Activated T-helper 2 cell treated with anti-CD3 and anti-CD28 coated beads, Interferon-gamma antibody, Interleukin-2, Interleukin-4, amounts not matched to agents 10 μg/mL and 5 μg/mL and 100 μg/mL, durations not matched to agents 14 hours and 24 hours and 36 hours (primary cell): ENCODE measurements at regions of chr6 and their contacts with region 1.

Region 1: GRCh38 chr6:109382576-109383437 is 540 bp upstream of the CD164 start:
- DNase-seq: peak; percentile 92
- H3K4me3 Mint-ChIP-seq: peak overlapping the region; percentile 98
- H3K27ac Mint-ChIP-seq: peak overlapping the region; percentile 99
- H3K4me1 Mint-ChIP-seq: peaks cover 39% of the 10 kb centered on the region
- H3K27me3 Mint-ChIP-seq: peaks cover 3% of the 10 kb centered on the region

Region 2: GRCh38 chr6:108074359-108075144 is 1308.3 kb before region 1 on chr6 and contains the start of gene OSTM1:
- intact Hi-C with region 1: loop called (anchors 10 kb)
- DNase-seq: peak; percentile 92
- H3K4me3 Mint-ChIP-seq: peak within 1 kb of the TSS; percentile 78
- H3K27ac Mint-ChIP-seq: peak within 1 kb of the TSS; percentile 28
- H3K4me1 Mint-ChIP-seq: peaks cover 18% of the 10 kb centered on the region
- H3K27me3 Mint-ChIP-seq: peaks cover 22% of the 10 kb centered on the region
- total RNA-seq, gene OSTM1: 15.5 and 16.4 TPM in 2 replicates

Region 3: DNA sequence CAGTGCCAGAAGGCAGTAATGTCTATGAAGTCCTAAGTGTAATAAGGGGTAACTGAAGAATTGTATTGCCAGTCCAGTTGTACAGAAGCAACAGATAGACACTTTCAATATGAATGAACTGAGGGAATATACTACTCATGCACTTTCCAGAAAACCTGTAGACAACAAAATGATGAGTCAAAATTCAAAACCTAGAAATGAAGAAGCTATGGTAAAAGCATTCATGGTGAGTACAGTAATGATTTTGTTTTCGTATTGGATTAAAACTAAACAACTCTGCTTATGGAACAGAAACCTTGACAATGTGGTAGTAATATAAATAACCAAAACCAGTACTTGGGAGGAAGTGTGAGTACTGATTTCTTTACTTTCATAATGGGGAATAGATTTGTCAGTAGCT is 499.6 kb before region 1 on chr6:
- intact Hi-C with region 1: loop called (anchors 5 kb)
- DNase-seq: no peak
- H3K4me3 Mint-ChIP-seq: no peak overlapping the region
- H3K27ac Mint-ChIP-seq: peak overlapping the region; percentile 84
- H3K4me1 Mint-ChIP-seq: peaks cover 37% of the 10 kb centered on the region
- H3K27me3 Mint-ChIP-seq: peaks cover 19% of the 10 kb centered on the region

Region 4: GRCh38 chr6:109187399-109188114 is 195.2 kb before region 1 on chr6:
- intact Hi-C with region 1: loop called (anchors 1 kb)
- DNase-seq: peak; percentile 20
- H3K4me3 Mint-ChIP-seq: no peak overlapping the region
- H3K27ac Mint-ChIP-seq: no peak overlapping the region
- H3K4me1 Mint-ChIP-seq: peaks cover 11% of the 10 kb centered on the region
- H3K27me3 Mint-ChIP-seq: peaks cover 30% of the 10 kb centered on the region

Region 5: GRCh38 chr6:109440331-109441068 is 57.7 kb after region 1 on chr6 and contains the starts of genes PPIL6 and SMPD2:
- intact Hi-C with region 1: loop called (anchors 2 kb)
- DNase-seq: peak; percentile 72
- H3K4me3 Mint-ChIP-seq: peak within 1 kb of the TSS; percentile 92
- H3K27ac Mint-ChIP-seq: peak within 1 kb of the TSS; percentile 92
- H3K4me1 Mint-ChIP-seq: peaks cover 17% of the 10 kb centered on the region
- H3K27me3 Mint-ChIP-seq: no peaks in the 10 kb centered on the region
- total RNA-seq, gene PPIL6: 0.32 TPM in 1 of 2 replicates, not detected in the other
- total RNA-seq, gene SMPD2: 14.7 and 17.5 TPM in 2 replicates

Region 6: GRCh38 chr6:109491207-109491938 is 108.6 kb after region 1 on chr6:
- intact Hi-C with region 1: loop called (anchors 1 kb)
- DNase-seq: peak; percentile 57
- H3K4me3 Mint-ChIP-seq: peak overlapping the region; percentile 58
- H3K27ac Mint-ChIP-seq: peak overlapping the region; percentile 94
- H3K4me1 Mint-ChIP-seq: peaks cover 51% of the 10 kb centered on the region
- H3K27me3 Mint-ChIP-seq: no peaks in the 10 kb centered on the region